ENCODE measurements at regions of chr13 and their contacts with region 1.

Region 1: DNA sequence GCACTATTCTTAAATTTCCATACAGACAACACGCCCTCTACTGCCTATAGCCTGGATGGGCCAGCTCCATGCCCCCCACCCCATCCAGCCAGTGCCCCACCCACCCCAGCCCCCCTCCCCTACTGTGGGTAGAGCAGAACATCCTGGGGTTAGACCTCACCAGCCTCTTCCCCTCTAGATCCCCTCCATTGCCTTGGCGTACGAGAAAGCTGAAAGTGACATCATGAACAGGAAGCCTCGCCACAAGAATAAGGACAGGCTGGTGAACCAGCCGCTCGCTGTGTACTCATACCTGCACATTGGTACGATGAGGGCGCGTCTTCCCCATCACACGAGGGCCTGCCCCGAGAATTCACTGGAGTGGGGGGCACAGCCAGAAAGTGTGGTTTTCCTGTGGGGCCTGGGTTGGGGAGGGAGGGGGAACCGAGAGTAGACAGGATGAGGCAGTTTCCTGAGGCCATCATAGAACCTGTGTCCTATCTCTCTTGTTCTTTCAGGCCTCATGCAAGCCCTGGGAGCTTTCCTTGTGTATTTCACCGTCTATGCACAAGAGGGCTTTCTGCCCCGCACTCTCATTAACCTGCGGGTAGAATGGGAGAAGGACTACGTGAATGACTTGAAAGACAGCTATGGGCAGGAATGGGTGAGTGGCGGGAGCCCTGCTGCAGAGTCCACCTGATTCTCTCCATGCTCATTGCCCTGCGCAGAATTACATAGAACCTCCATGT is 29.1 kb downstream of the ATP12A start:
- DNase-seq: peak; percentile 81
- H3K4me3 Mint-ChIP-seq: no peak overlapping the region
- H3K27ac Mint-ChIP-seq: peak overlapping the region; percentile 78
- H3K4me1 Mint-ChIP-seq: peaks cover 30% of the 10 kb centered on the region
- H3K27me3 Mint-ChIP-seq: peaks cover 5% of the 10 kb centered on the region

Region 2: DNA sequence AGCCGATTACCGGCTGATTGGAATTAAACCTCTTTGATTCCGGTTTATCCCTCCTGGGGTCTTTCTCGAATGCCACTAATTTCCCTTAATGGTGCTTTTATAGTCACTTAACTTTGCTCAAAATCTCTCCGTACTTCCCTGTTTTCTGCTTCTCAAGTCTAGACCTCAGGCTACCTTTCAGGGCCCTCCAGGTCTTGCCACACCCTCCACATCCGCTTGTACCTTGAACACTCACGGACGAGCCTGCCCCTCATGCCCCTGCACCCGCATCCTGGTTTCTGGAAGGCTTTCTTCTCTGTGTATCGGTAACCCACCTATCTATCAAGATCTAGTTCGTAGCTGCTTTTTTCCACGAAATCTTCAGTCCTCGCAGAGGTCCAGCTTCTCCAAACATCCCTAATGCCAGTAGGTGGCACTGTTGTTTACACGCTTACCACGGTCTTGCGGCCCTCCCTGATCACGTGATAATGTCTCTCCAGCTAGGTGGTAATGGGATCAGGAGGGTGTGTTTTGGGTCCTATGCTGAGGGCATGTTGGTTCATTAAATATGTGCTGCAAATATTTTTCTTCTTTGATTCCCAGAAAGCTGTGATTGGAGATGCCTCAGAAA is 15.4 kb before region 1 on chr13:
- CTCF ChIA-PET with region 1: interaction called, 10 read pairs
- POLR2A ChIA-PET with region 1: no interaction called
- DNase-seq: peak; percentile 57
- H3K4me3 Mint-ChIP-seq: peak overlapping the region; percentile 4
- H3K27ac Mint-ChIP-seq: no peak overlapping the region
- H3K4me1 Mint-ChIP-seq: peaks cover 12% of the 10 kb centered on the region
- H3K27me3 Mint-ChIP-seq: peaks cover 35% of the 10 kb centered on the region

Measured in activated CD4-positive, alpha-beta T cell treated with anti-CD3 and anti-CD28 coated beads, Interleukin-2, amount 10 ng/mL, durations not matched to agents 7 days and 5 days (primary cell).